Ascending aorta (tissue), 2 donors: ENCODE measurements at regions of chr4 and their contacts with region 1.

Region 1: DNA sequence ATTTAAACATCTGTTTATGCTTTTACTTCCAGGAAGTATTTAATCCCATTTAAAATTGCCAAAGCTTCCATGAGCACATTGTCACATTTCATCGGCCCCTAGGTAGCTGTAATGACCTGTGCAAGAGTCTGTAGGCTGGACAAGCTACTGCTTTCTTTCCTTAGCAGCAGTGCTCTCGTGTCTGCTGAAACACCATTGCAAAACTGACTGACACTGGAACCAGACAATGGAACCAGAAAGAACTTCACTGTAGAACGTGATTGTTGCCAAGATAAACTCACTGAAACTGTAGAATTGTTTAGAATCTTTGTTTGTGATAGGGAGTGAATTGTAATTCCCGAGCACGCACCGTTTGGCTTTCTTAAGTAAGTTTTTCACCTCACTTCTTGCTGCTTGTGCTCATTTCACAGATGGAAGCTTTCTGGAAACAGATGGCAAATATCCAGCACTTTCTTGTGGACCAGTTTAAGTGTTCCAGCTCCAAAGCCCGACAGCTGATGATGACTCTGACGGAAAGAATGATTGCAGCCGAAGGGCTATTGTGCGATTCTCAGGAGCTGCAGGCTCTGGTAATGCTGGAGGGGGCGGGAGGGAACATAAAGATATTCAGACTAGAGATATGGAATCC is 36.9 kb downstream of the EVC start:
- DNase-seq: peak; percentile 59 to 92
- H3K4me3 ChIP-seq: no peak overlapping the region
- H3K27ac ChIP-seq: peak overlapping the region; percentile 80 to 85
- H3K4me1 ChIP-seq: peaks cover 5 to 9% of the 10 kb centered on the region in 2 donors
- H3K27me3 ChIP-seq: no peaks in the 10 kb centered on the region
- CTCF ChIP-seq: no peak

Region 2: DNA sequence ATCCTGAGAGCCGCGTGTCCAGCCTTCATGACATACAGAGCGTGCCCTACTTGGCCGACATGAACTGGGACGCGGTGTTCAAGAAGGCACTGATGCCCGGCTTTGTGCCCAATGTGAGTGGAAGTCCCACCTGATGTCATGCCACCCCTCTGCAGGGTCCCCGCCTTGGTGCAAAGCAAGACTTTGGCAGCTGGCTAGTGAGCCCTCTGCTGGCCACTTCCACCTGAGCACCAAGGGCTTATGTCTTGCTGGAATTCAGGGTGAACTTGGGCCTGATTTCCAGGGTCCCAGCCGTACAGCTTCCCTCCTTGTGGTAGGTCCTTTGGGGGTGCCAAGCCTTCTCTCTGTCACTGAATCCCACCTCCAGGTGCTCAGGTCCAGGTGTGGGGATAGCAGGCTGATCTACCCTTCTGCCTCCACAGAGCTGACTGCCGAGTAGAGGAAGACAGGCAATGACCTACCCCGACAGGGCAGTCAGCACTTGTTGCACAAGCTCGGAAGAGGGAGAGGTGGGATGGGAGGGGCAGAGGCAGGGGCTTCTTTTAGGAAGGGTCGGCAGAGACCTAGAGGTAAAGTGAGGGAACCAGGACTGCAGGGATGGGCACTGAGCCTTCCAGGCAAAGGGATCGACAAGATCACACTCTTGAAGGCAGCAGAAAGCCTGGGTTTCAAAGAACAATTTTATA is 287.6 kb before region 1 on chr4:
- intact Hi-C with region 1: no loop called
- DNase-seq: peak in 1 of 2 donors; percentile 50
- H3K4me3 ChIP-seq: no peak overlapping the region
- H3K27ac ChIP-seq: no peak overlapping the region
- H3K4me1 ChIP-seq: no peaks in the 10 kb centered on the region
- H3K27me3 ChIP-seq: no peaks in the 10 kb centered on the region
- CTCF ChIP-seq: no peak

Region 3: GRCh38 chr4:5730993-5731990 is 16.6 kb before region 1 on chr4:
- intact Hi-C with region 1: loop called (anchors 2 kb)
- DNase-seq: peak; percentile 59 to 82
- H3K4me3 ChIP-seq: no peak overlapping the region
- H3K27ac ChIP-seq: peak overlapping the region; percentile 82 to 85
- H3K4me1 ChIP-seq: peaks cover 4 to 20% of the 10 kb centered on the region in 2 donors
- H3K27me3 ChIP-seq: no peaks in the 10 kb centered on the region
- CTCF ChIP-seq: no peak

Region 4: DNA sequence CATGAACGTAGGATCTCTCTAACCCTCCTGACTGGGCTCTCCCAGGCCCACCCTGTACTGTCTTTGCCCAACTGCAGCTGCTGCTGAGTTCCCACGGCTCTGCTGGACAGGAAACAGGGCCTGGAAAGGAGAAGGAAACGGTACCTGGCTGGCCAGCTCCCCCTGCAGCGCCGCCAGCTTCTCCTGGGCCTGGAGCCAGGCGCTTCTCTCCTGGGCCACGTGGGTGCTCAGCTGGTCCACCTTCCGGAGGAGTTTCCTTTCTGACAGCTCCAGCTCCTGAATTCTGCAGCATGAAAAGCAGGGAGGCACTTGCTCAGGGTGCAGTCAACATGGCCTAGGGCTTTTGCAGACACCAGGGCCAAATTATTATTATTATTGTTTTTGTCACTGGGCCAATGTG is 263.8 kb after region 1 on chr4:
- intact Hi-C with region 1: no loop called
- DNase-seq: no peak
- H3K4me3 ChIP-seq: no peak overlapping the region
- H3K27ac ChIP-seq: no peak overlapping the region
- H3K4me1 ChIP-seq: no peaks in the 10 kb centered on the region
- H3K27me3 ChIP-seq: no peaks in the 10 kb centered on the region
- CTCF ChIP-seq: no peak